H1 (cell line): ENCODE measurements at regions of chr5 and their contacts with region 1.

Region 1: DNA sequence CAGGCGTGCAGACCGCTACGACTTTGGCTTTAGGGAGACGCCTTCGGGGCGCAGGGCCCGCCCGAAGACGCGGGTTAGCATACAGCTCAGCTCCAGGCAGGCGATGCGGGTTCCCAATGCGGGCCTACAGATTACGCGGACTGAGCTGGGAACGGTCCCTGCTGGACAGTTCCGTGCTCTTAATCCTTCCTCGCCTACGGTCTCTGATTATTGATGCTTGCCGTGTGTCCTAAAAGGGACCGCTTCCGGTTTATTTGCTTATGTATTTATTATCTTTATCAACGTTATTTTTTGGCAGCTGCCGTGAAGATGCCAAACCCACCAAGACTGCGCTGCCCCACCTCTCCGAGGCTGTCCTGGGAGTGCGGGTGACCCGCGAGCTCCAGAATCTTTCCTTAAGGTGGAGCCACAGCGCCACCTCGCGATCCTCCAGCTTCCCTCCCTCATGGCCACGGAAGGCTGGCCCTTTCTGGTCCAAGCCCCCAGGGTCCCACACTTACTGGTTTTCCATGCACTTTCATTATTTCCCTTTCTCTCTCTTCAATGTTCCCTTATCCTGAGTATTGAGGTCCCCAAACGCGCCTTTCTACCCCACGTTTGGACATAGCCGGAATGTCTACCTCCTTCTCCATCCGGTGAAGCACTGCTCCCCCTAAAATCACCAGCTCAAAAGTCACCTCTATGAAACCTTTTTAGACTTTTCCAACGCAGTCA is 7.0 kb upstream of the EBF1 start:
- DNase-seq: peak in 1 of 2 experiments; percentile 91
- H3K4me3 ChIP-seq: peak overlapping the region in 2 of 4 experiments; percentile 16 to 57; a peak in 5 of 8 replicates
- H3K27ac ChIP-seq: no peak overlapping the region
- H3K4me1 ChIP-seq: peaks cover 8 to 19% (median 13%) of the 10 kb centered on the region in 4 experiments; a peak in 6 of 7 replicates
- H3K27me3 ChIP-seq: peaks cover 48 to 53% (median 52%) of the 10 kb centered on the region in 4 experiments
- CTCF ChIP-seq: peak; percentile 88 to 93 (median 90)
- EP300 ChIP-seq: no peak
- POLR2A ChIP-seq: no peak
- RAD21 ChIP-seq: peak; percentile 95 to 98

Region 2: GRCh38 chr5:158170060-158170459 is 936.7 kb before region 1 on chr5:
- CTCF ChIA-PET with region 1: interaction called, 27 read pairs
- POLR2A ChIA-PET with region 1: no interaction called
- DNase-seq: no peak
- H3K4me3 ChIP-seq: no peak overlapping the region
- H3K27ac ChIP-seq: no peak overlapping the region
- H3K4me1 ChIP-seq: peaks cover 0 to under 1% (median 0%) of the 10 kb centered on the region in 4 experiments; a peak in 1 of 7 replicates
- H3K27me3 ChIP-seq: peaks cover 0 to 2% (median 0%) of the 10 kb centered on the region in 4 experiments; a peak in 1 of 7 replicates
- CTCF ChIP-seq: no peak
- EP300 ChIP-seq: no peak
- POLR2A ChIP-seq: no peak
- RAD21 ChIP-seq: no peak

Region 3: GRCh38 chr5:158174918-158175851 is 931.5 kb before region 1 on chr5:
- CTCF ChIA-PET with region 1: interaction called, 27 read pairs
- POLR2A ChIA-PET with region 1: no interaction called
- DNase-seq: peak; percentile 73 to 90
- H3K4me3 ChIP-seq: no peak overlapping the region
- H3K27ac ChIP-seq: no peak overlapping the region
- H3K4me1 ChIP-seq: peaks cover 0 to 6% (median 4%) of the 10 kb centered on the region in 4 experiments; a peak in 4 of 7 replicates
- H3K27me3 ChIP-seq: no peaks in the 10 kb centered on the region
- CTCF ChIP-seq: peak; percentile 72 to 88 (median 85)
- EP300 ChIP-seq: no peak
- POLR2A ChIP-seq: no peak
- RAD21 ChIP-seq: peak; percentile 99

Region 4: GRCh38 chr5:158701406-158702177 is 405.1 kb before region 1 on chr5:
- CTCF ChIA-PET with region 1: interaction called, 43 read pairs
- POLR2A ChIA-PET with region 1: no interaction called
- DNase-seq: no peak
- H3K4me3 ChIP-seq: no peak overlapping the region
- H3K27ac ChIP-seq: no peak overlapping the region
- H3K4me1 ChIP-seq: peaks cover 4 to 18% (median 10%) of the 10 kb centered on the region in 4 experiments; a peak in 6 of 7 replicates
- H3K27me3 ChIP-seq: no peaks in the 10 kb centered on the region; a peak in 1 of 7 replicates
- CTCF ChIP-seq: no peak
- EP300 ChIP-seq: no peak
- POLR2A ChIP-seq: no peak
- RAD21 ChIP-seq: no peak

Region 5: GRCh38 chr5:158770506-158770905 is 336.2 kb before region 1 on chr5:
- CTCF ChIA-PET with region 1: interaction called, 25 read pairs
- POLR2A ChIA-PET with region 1: interaction called, 3 read pairs
- DNase-seq: peak; percentile 7 to 48
- H3K4me3 ChIP-seq: no peak overlapping the region
- H3K27ac ChIP-seq: no peak overlapping the region
- H3K4me1 ChIP-seq: no peaks in the 10 kb centered on the region; a peak in 1 of 7 replicates
- H3K27me3 ChIP-seq: no peaks in the 10 kb centered on the region
- CTCF ChIP-seq: peak; percentile 68 to 82 (median 72)
- EP300 ChIP-seq: no peak
- POLR2A ChIP-seq: no peak
- RAD21 ChIP-seq: peak; percentile 76 to 77

Region 6: GRCh38 chr5:159120446-159120845 is 13.7 kb after region 1 on chr5:
- CTCF ChIA-PET with region 1: interaction called, 23 read pairs
- POLR2A ChIA-PET with region 1: no interaction called
- DNase-seq: no peak
- H3K4me3 ChIP-seq: no peak overlapping the region
- H3K27ac ChIP-seq: no peak overlapping the region
- H3K4me1 ChIP-seq: no peaks in the 10 kb centered on the region
- H3K27me3 ChIP-seq: no peaks in the 10 kb centered on the region
- CTCF ChIP-seq: no peak
- EP300 ChIP-seq: no peak
- POLR2A ChIP-seq: no peak
- RAD21 ChIP-seq: no peak

Region 7: GRCh38 chr5:159178978-159179377 is 72.3 kb after region 1 on chr5:
- CTCF ChIA-PET with region 1: no interaction called
- POLR2A ChIA-PET with region 1: no interaction called
- DNase-seq: no peak
- H3K4me3 ChIP-seq: no peak overlapping the region
- H3K27ac ChIP-seq: no peak overlapping the region
- H3K4me1 ChIP-seq: no peaks in the 10 kb centered on the region
- H3K27me3 ChIP-seq: no peaks in the 10 kb centered on the region
- CTCF ChIP-seq: no peak
- EP300 ChIP-seq: no peak
- POLR2A ChIP-seq: no peak
- RAD21 ChIP-seq: no peak